GM13977 (cell line): ENCODE measurements at regions of chr16 and their contacts with region 1.

Region 1: GRCh38 chr16:73196670-73197069 is 148.7 kb upstream of the ZFHX3 start:
- DNase-seq: peak; percentile 56
- CTCF ChIP-seq: peak; percentile 66

Region 2: DNA sequence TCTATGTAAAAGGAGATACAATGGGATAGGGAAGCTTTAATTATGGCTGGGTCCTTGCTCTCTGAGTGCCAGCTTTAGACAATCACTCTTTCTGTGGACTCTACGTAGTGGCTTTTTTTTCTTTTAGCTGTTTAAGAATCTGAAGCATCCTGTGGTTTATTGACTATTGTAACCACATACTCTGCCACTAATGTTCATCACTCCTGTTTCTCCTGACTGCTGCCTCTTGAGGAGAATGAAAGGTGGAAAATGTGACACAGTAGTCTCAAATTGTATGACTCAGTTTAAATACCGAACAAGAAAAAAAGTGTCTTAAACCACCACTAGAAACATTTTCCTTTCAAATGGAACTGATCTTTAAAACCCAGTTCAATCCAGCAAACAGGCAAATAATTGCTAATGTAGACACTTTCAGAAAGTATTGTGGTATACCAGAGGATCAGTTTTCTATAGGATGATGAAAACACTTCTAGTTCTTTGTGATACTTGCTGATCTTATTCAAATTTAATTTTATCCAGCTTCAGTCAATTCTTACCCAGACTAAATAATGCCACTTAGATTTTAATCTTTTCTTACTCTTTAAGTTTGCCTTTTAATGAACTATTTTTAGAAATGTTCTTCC is 722.1 kb before region 1 on chr16:
- in situ Hi-C with region 1: loop called (anchors 25 kb)
- DNase-seq: no peak
- CTCF ChIP-seq: no peak

Region 3: DNA sequence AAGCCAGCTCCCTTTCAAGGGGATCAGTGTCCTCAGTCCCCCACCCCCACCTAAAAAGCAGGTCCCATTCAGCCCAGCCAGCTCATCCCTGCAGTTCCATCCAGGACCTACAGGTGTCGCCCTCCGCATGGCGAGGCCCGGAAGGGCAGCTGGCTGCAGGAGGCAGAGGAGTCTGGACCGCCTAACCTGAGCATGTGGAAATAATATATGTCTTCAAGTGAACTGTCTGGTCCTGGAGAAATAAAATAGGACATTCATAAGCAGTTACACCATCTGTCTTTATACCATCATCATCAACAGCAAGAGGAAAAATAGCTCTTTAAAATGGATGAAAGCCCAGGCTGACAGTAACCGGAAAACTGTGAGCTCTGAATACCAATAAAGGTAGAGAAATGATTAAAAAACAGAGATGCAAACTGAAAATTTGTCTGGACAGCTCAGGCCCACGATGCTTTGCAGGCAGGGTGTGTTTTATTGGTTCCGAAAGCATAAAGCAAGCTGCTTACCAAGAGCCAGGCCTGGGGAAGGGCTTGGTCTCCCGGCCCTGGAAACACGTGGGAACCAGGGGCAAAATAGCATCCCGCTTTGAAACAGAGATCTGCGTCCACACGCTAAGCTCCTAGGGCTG is 363.9 kb before region 1 on chr16:
- in situ Hi-C with region 1: loop called (anchors 25 kb)
- DNase-seq: peak; percentile 63
- CTCF ChIP-seq: peak; percentile 99

Region 4: DNA sequence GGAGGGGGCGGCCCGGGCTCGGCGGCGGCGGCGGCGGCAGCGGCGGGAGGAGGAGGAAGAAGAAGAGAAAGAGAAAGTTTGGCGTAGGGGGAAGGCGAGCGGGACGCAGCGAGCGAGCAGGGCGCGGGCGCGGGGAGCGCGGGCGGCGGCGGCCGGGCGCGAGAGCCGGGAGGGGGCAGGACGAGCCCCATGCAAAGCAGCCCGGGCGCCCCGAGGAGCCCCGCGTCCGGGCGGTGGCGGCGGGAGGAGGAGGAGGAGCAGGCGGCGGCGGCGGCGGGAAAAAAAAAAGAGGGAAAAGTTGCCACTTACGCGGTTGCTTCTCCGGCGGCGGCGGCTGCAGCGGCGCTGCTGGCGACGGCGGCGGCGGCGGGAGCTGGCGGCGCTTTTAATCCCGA is 138.5 kb before region 1 on chr16:
- in situ Hi-C with region 1: no loop called
- DNase-seq: peak; percentile 89
- CTCF ChIP-seq: no peak